ENCODE measurements at regions of chr2 and their contacts with region 1.

Region 1: GRCh38 chr2:68709421-68709911 is 25.1 kb upstream of the ARHGAP25 start:
- DNase-seq: no peak
- ATAC-seq: peak; percentile 71
- H3K4me3 Mint-ChIP-seq: no peak overlapping the region
- H3K27ac Mint-ChIP-seq: peak overlapping the region; percentile 6
- H3K4me1 Mint-ChIP-seq: peaks cover 39% of the 10 kb centered on the region
- H3K27me3 Mint-ChIP-seq: no peaks in the 10 kb centered on the region
- CTCF ChIP-seq: peak; percentile 51

Region 2: GRCh38 chr2:68594674-68595492 is 114.6 kb before region 1 on chr2:
- CTCF ChIA-PET with region 1: interaction called, 12 read pairs
- POLR2A ChIA-PET with region 1: no interaction called
- intact Hi-C with region 1: no loop called
- DNase-seq: peak; percentile 21
- ATAC-seq: peak; percentile 52
- H3K4me3 Mint-ChIP-seq: peak overlapping the region; percentile 0
- H3K27ac Mint-ChIP-seq: no peak overlapping the region
- H3K4me1 Mint-ChIP-seq: peaks cover 12% of the 10 kb centered on the region
- H3K27me3 Mint-ChIP-seq: peaks cover 5% of the 10 kb centered on the region
- CTCF ChIP-seq: peak; percentile 64

Region 3: GRCh38 chr2:68726608-68727367 is 17.3 kb after region 1 on chr2:
- CTCF ChIA-PET with region 1: interaction called, 22 read pairs
- POLR2A ChIA-PET with region 1: interaction called, 7 read pairs
- intact Hi-C with region 1: loop called (anchors 2 kb)
- DNase-seq: peak; percentile 52
- ATAC-seq: peak; percentile 95
- H3K4me3 Mint-ChIP-seq: peak overlapping the region; percentile 29
- H3K27ac Mint-ChIP-seq: peak overlapping the region; percentile 78
- H3K4me1 Mint-ChIP-seq: peaks cover 49% of the 10 kb centered on the region
- H3K27me3 Mint-ChIP-seq: no peaks in the 10 kb centered on the region
- CTCF ChIP-seq: no peak

Region 4: GRCh38 chr2:68751397-68752339 is 42.2 kb after region 1 on chr2:
- CTCF ChIA-PET with region 1: interaction called, 74 read pairs
- POLR2A ChIA-PET with region 1: interaction called, 8 read pairs
- intact Hi-C with region 1: loop called (anchors 1 kb)
- DNase-seq: peak; percentile 79
- ATAC-seq: peak; percentile 92
- H3K4me3 Mint-ChIP-seq: peak overlapping the region; percentile 62
- H3K27ac Mint-ChIP-seq: peak overlapping the region; percentile 92
- H3K4me1 Mint-ChIP-seq: peaks cover 83% of the 10 kb centered on the region
- H3K27me3 Mint-ChIP-seq: no peaks in the 10 kb centered on the region
- CTCF ChIP-seq: peak; percentile 67

Region 5: GRCh38 chr2:68807821-68808266 is 98.4 kb after region 1 on chr2:
- CTCF ChIA-PET with region 1: interaction called, 5 read pairs
- POLR2A ChIA-PET with region 1: no interaction called
- intact Hi-C with region 1: loop called (anchors 1 kb)
- DNase-seq: no peak
- ATAC-seq: no peak
- H3K4me3 Mint-ChIP-seq: no peak overlapping the region
- H3K27ac Mint-ChIP-seq: peak overlapping the region; percentile 87
- H3K4me1 Mint-ChIP-seq: peaks cover 64% of the 10 kb centered on the region
- H3K27me3 Mint-ChIP-seq: no peaks in the 10 kb centered on the region
- CTCF ChIP-seq: no peak

Region 6: DNA sequence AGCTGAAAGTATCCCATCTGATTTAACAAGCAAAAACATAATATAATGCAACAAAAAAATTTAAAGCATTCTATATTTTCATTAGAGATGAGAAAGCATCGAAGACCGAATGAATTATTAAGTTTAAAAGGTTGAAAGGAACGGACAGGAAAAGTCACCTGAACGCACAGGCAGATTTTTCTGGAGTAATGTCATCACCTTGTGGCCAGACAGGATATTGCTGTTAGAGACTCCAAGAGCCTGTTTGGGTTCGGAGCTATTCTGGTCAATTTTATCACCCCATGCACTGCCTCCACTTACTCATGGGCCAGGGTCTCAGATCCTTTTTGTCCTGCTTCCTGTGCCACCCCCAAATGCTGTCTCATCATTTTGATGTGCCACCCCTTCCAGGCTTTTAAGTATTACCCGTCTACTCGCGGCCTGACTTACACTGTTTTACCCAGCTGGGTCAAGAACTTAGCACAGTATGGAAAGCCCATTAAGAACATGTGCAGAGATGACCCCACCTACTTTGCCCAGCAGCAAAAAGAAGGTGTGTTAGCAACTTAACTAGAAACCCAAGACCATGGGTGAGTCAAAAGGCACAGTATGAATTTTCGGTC is 215.9 kb after region 1 on chr2:
- CTCF ChIA-PET with region 1: interaction called, 102 read pairs
- POLR2A ChIA-PET with region 1: interaction called, 4 read pairs
- intact Hi-C with region 1: loop called (anchors 1 kb)
- DNase-seq: no peak
- ATAC-seq: peak; percentile 83
- H3K4me3 Mint-ChIP-seq: no peak overlapping the region
- H3K27ac Mint-ChIP-seq: no peak overlapping the region
- H3K4me1 Mint-ChIP-seq: peaks cover 3% of the 10 kb centered on the region
- H3K27me3 Mint-ChIP-seq: no peaks in the 10 kb centered on the region
- CTCF ChIP-seq: no peak